ENCODE measurements at regions of chr5 and their contacts with region 1.

Region 1: DNA sequence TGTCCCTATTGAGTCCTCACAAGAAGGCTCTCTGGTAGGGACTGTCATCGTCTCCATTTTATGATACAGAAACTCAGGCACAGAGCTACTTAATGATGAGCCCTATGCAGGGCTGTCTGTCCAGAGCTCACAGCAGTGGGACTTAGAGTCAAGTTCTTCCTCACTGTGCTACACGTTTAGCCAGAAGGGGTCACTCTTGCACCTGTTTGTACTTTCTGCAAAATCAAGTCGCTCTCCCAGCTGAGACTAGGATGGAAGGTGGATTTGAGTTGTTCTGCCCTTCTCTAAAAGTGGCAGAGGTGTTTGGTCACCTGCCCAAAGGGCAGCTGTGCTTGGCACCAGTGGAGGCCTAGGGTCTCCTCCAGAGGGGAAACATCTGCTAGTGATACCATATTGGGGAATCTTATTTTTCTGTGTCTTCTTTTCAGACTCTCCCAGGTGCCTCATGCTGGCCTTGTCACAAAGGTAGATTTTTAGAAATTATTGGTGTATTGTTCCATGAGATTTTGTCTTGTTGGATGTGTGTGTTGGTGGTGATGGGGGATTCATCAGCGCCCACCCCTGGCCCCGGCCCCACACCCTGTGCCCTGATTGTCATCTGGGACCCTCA is 104.2 kb downstream of the PPARGC1B start:
- DNase-seq: peak; percentile 88
- H3K4me3 Mint-ChIP-seq: no peak overlapping the region
- H3K27ac Mint-ChIP-seq: no peak overlapping the region
- H3K4me1 Mint-ChIP-seq: peaks cover 10% of the 10 kb centered on the region
- H3K27me3 Mint-ChIP-seq: no peaks in the 10 kb centered on the region

Region 2: GRCh38 chr5:149990518-149991376 is 156.4 kb after region 1 on chr5:
- intact Hi-C with region 1: loop called (anchors 1 kb)
- DNase-seq: peak; percentile 89
- H3K4me3 Mint-ChIP-seq: no peak overlapping the region
- H3K27ac Mint-ChIP-seq: no peak overlapping the region
- H3K4me1 Mint-ChIP-seq: no peaks in the 10 kb centered on the region
- H3K27me3 Mint-ChIP-seq: no peaks in the 10 kb centered on the region